ENCODE measurements at regions of chr10 and their contacts with region 1.

Region 1: DNA sequence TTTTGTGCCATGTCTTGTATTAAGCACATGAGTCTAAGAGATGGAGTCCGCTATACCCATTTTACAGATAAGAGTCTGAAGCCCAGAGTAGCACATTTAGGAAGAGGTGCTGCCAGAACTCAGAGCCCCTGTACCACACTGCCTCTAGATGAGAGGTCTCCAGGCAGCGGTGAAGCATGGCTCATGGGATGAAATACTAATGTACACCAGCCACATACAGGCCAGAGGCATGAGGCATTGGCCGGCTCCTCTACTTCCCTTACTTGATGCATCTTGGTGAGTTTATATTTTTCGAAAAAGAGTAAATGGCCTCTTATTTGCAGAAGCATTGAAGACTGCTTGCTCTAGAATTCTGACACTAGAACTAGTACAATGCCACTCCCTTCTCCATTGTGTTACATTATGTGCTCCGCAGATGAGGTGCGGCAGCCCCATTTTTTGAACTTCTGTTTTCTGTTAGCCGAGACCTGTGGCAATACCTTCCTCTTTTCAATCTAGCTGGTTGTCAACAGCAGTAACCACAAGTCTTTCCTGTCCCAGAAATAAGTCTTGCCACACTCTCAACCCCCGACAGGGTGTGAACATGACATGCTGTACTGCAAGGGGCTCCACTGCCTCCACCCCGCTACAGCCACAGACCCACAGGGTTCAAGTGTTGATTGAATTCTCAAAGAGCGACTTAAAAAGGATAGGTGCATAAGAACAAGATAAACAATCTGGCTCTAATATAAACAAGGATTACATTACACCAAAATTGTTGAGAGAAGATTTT is 145.3 kb downstream of the CELF2 start:
- DNase-seq: peak in 1 of 2 donors; percentile 72
- H3K4me3 ChIP-seq: peak overlapping the region in 1 of 3 donors; percentile 19
- H3K27ac ChIP-seq: peak overlapping the region; percentile 69 to 75
- H3K4me1 ChIP-seq: no peaks in the 10 kb centered on the region
- H3K27me3 ChIP-seq: peaks cover 0 to 11% of the 10 kb centered on the region in 2 donors
- CTCF ChIP-seq: no peak
- POLR2A ChIP-seq: no peak

Region 2: GRCh38 chr10:11230498-11231167 is 67.6 kb after region 1 on chr10:
- intact Hi-C with region 1: no loop called
- DNase-seq: no peak
- H3K4me3 ChIP-seq: no peak overlapping the region
- H3K27ac ChIP-seq: no peak overlapping the region
- H3K4me1 ChIP-seq: no peaks in the 10 kb centered on the region
- H3K27me3 ChIP-seq: no peaks in the 10 kb centered on the region
- CTCF ChIP-seq: no peak
- POLR2A ChIP-seq: no peak

Region 3: DNA sequence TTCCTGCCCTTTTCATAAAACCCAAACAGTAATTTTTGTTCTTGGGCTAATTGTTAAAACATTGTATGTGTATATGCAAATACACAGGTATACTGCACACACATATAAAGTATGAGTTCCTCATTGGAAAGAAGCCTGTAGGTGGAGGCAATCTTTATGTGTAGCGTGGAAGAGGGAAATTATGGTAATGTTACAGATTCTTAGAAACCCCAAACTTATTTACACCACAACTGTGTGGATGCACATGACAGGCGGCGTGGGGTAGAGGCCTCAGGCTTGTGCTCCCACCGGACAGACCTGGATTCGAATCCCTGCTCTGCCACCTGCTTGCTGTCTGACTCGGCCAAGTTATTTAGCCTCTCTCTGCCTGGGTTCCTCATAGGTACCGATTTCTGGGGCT is 77.6 kb after region 1 on chr10:
- intact Hi-C with region 1: loop called (anchors 2 kb)
- DNase-seq: no peak
- H3K4me3 ChIP-seq: no peak overlapping the region
- H3K27ac ChIP-seq: no peak overlapping the region
- H3K4me1 ChIP-seq: no peaks in the 10 kb centered on the region
- H3K27me3 ChIP-seq: no peaks in the 10 kb centered on the region
- CTCF ChIP-seq: no peak
- POLR2A ChIP-seq: no peak

Measured in breast epithelium (tissue), 4 donors.